Natural killer cell (primary cell): ENCODE measurements at regions of chr11 and their contacts with region 1.

Region 1: GRCh38 chr11:122754553-122755322 is 83.6 kb upstream of the CRTAM start:
- DNase-seq: peak in 1 of 2 donors; percentile 75
- ATAC-seq: peak in 2 of 3 donors; percentile 42 to 57
- H3K4me3 ChIP-seq: no peak overlapping the region
- H3K4me3 Mint-ChIP-seq: no peak overlapping the region
- H3K27ac ChIP-seq: no peak overlapping the region
- H3K27ac Mint-ChIP-seq: no peak overlapping the region
- H3K4me1 ChIP-seq: peaks cover 41% of the 10 kb centered on the region
- H3K4me1 Mint-ChIP-seq: peaks cover 40 to 50% of the 10 kb centered on the region in 2 donors
- H3K27me3 ChIP-seq: no peaks in the 10 kb centered on the region
- H3K27me3 Mint-ChIP-seq: no peaks in the 10 kb centered on the region
- CTCF ChIP-seq: peak; percentile 52

Region 2: GRCh38 chr11:122584670-122585069 is 170.1 kb before region 1 on chr11:
- intact Hi-C with region 1: loop called (anchors 5 kb)
- DNase-seq: no peak
- ATAC-seq: no peak
- H3K4me3 ChIP-seq: no peak overlapping the region
- H3K4me3 Mint-ChIP-seq: no peak overlapping the region
- H3K27ac ChIP-seq: no peak overlapping the region
- H3K27ac Mint-ChIP-seq: no peak overlapping the region
- H3K4me1 ChIP-seq: peaks cover 8% of the 10 kb centered on the region
- H3K4me1 Mint-ChIP-seq: peaks cover 10 to 11% of the 10 kb centered on the region in 2 donors
- H3K27me3 ChIP-seq: peaks cover 3% of the 10 kb centered on the region
- H3K27me3 Mint-ChIP-seq: peaks cover 20 to 21% of the 10 kb centered on the region in 2 donors
- CTCF ChIP-seq: no peak

Region 3: DNA sequence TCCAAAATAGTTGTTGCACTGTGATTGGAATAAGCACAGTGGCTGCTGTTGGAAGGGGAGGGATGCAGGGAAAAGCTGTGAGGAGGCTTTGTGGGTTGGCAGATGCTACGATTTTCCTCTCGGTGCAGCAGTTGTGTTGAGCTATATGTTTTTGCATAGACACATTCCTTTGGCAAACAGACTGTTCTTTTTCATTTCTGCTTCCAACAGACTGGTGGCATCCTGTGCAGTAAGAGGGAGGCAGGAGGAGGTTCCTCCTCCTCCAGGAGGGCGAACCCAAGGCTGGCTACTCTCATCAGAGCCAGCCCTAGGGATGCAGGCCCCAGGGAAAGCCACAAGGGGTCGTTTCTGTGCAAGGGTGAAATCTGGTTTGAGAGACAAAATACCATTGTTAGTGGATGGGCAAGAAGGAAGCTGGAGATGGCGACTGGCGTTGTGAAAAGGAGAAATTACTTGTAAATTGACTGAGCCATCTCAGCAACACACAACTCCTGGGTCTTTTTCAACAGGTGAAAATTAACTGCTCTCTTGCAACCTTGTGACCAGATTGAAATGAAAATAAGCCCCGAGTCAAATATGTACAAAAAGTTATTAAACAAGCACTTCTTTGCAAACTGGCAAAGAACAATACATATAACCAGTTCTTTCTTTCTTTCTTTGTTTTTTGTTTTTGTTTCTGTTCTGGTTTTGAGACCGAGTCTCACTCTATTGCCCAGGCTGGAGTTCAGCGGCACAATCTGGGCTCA is 125.8 kb before region 1 on chr11:
- intact Hi-C with region 1: loop called (anchors 1 kb)
- DNase-seq: peak; percentile 46 to 82
- ATAC-seq: peak; percentile 79 to 94 (median 90)
- H3K4me3 ChIP-seq: no peak overlapping the region
- H3K4me3 Mint-ChIP-seq: no peak overlapping the region
- H3K27ac ChIP-seq: no peak overlapping the region
- H3K27ac Mint-ChIP-seq: no peak overlapping the region
- H3K4me1 ChIP-seq: peaks cover 3% of the 10 kb centered on the region
- H3K4me1 Mint-ChIP-seq: peaks cover 0 to 5% of the 10 kb centered on the region in 2 donors
- H3K27me3 ChIP-seq: no peaks in the 10 kb centered on the region
- H3K27me3 Mint-ChIP-seq: no peaks in the 10 kb centered on the region
- CTCF ChIP-seq: peak; percentile 81

Region 4: GRCh38 chr11:122655527-122656072 is 99.1 kb before region 1 on chr11 and contains the start of gene UBASH3B:
- intact Hi-C with region 1: loop called (anchors 2 kb)
- DNase-seq: peak; percentile 51 to 72
- ATAC-seq: peak; percentile 74 to 81 (median 77)
- H3K4me3 ChIP-seq: peak within 1 kb of the TSS; percentile 72
- H3K4me3 Mint-ChIP-seq: peak within 1 kb of the TSS; percentile 96
- H3K27ac ChIP-seq: peak within 1 kb of the TSS; percentile 61
- H3K27ac Mint-ChIP-seq: peak within 1 kb of the TSS; percentile 79 to 88
- H3K4me1 ChIP-seq: peaks cover 39% of the 10 kb centered on the region
- H3K4me1 Mint-ChIP-seq: peaks cover 40 to 46% of the 10 kb centered on the region in 2 donors
- H3K27me3 ChIP-seq: no peaks in the 10 kb centered on the region
- H3K27me3 Mint-ChIP-seq: peaks cover 0 to 13% of the 10 kb centered on the region in 2 donors
- CTCF ChIP-seq: no peak
- total RNA-seq, gene UBASH3B: 28.7 to 33.9 (median 33.5) TPM

Region 5: DNA sequence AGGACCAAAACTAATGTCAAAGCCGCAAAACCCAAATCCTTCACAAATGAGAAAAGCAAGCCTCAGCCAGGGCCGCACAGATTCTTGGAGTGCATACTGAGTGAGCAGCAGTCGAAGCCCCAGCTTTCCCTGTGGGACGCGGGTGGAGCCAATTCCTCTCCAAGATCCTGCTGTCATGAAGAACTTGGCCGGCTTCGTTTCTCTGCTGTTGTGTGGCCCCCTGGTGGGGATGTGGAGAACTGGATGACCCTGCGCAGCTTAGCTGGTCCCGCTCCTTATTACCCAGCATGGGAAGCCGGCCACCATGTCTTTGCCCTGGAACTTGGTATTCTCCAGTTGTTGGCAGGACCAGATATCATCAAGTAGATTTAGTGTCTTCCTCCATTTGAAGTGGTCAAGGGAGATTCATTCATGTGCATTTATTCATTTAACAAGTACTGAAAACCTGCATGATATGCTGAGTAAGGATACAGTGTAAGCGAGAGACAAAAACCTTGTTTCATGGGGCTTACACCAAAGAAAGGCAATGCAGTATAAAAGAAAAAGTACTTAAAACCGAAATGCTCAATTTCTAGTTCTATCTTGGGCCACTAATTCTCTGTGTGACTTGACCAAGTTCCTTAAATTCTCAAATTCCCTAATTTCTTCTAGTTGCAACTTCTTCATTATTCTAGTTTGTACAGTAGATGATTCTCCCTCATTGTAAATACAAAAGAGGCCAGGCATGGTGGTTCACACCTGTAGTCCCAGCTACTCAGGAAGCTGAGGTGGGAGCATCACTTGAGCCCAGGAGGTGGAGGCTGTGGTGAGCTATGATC is 26.8 kb after region 1 on chr11:
- intact Hi-C with region 1: loop called (anchors 1 kb)
- DNase-seq: peak; percentile 66 to 86
- ATAC-seq: peak; percentile 82 to 94 (median 92)
- H3K4me3 ChIP-seq: no peak overlapping the region
- H3K4me3 Mint-ChIP-seq: no peak overlapping the region
- H3K27ac ChIP-seq: no peak overlapping the region
- H3K27ac Mint-ChIP-seq: no peak overlapping the region
- H3K4me1 ChIP-seq: peaks cover 4% of the 10 kb centered on the region
- H3K4me1 Mint-ChIP-seq: peaks cover 7 to 11% of the 10 kb centered on the region in 2 donors
- H3K27me3 ChIP-seq: no peaks in the 10 kb centered on the region
- H3K27me3 Mint-ChIP-seq: no peaks in the 10 kb centered on the region
- CTCF ChIP-seq: peak; percentile 87

Region 6: DNA sequence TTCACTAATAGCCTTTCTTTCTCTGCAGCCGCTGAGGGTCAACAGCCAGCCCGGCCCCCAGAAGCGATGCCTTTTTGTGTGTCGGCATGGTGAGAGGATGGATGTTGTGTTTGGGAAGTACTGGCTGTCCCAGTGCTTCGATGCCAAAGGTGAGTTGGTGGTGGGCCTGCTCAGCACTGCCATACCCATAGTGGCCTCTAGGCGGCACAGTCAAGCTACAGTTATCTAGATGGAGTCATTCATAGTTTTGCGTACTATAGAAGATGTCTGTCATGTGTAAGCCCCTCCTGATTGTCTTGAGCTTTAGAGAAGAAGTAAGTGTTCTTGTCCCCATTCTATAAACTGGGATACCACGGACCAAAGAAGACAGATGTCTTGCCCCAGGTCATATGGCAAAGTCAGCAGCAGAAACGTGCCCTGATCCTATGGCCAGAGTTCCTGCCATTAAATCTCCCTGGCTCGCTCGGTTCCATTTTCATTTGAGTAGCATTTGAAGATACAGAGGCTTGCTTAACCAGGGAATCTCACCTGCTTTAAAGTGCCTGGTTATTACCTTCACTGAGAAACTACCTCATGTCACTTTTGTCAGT is 41.5 kb after region 1 on chr11:
- intact Hi-C with region 1: no loop called
- DNase-seq: peak; percentile 61 to 82
- ATAC-seq: peak; percentile 87 to 99 (median 95)
- H3K4me3 ChIP-seq: no peak overlapping the region
- H3K4me3 Mint-ChIP-seq: no peak overlapping the region
- H3K27ac ChIP-seq: no peak overlapping the region
- H3K27ac Mint-ChIP-seq: no peak overlapping the region
- H3K4me1 ChIP-seq: peaks cover 5% of the 10 kb centered on the region
- H3K4me1 Mint-ChIP-seq: peaks cover 0 to 5% of the 10 kb centered on the region in 2 donors
- H3K27me3 ChIP-seq: no peaks in the 10 kb centered on the region
- H3K27me3 Mint-ChIP-seq: no peaks in the 10 kb centered on the region
- CTCF ChIP-seq: peak; percentile 93

Region 7: GRCh38 chr11:122822241-122822640 is 67.5 kb after region 1 on chr11:
- intact Hi-C with region 1: no loop called
- DNase-seq: no peak
- ATAC-seq: no peak
- H3K4me3 ChIP-seq: no peak overlapping the region
- H3K4me3 Mint-ChIP-seq: no peak overlapping the region
- H3K27ac ChIP-seq: no peak overlapping the region
- H3K27ac Mint-ChIP-seq: no peak overlapping the region
- H3K4me1 ChIP-seq: no peaks in the 10 kb centered on the region
- H3K4me1 Mint-ChIP-seq: peaks cover 9 to 15% of the 10 kb centered on the region in 2 donors
- H3K27me3 ChIP-seq: no peaks in the 10 kb centered on the region
- H3K27me3 Mint-ChIP-seq: peaks cover 0 to 3% of the 10 kb centered on the region in 2 donors
- CTCF ChIP-seq: no peak